Activated naive CD4-positive, alpha-beta T cell treated with anti-CD3 and anti-CD28 coated beads, Interleukin-2, amount 10 ng/mL, durations not matched to agents 7 days and 5 days (primary cell): ENCODE measurements at regions of chr17 and their contacts with region 1.

Region 1: DNA sequence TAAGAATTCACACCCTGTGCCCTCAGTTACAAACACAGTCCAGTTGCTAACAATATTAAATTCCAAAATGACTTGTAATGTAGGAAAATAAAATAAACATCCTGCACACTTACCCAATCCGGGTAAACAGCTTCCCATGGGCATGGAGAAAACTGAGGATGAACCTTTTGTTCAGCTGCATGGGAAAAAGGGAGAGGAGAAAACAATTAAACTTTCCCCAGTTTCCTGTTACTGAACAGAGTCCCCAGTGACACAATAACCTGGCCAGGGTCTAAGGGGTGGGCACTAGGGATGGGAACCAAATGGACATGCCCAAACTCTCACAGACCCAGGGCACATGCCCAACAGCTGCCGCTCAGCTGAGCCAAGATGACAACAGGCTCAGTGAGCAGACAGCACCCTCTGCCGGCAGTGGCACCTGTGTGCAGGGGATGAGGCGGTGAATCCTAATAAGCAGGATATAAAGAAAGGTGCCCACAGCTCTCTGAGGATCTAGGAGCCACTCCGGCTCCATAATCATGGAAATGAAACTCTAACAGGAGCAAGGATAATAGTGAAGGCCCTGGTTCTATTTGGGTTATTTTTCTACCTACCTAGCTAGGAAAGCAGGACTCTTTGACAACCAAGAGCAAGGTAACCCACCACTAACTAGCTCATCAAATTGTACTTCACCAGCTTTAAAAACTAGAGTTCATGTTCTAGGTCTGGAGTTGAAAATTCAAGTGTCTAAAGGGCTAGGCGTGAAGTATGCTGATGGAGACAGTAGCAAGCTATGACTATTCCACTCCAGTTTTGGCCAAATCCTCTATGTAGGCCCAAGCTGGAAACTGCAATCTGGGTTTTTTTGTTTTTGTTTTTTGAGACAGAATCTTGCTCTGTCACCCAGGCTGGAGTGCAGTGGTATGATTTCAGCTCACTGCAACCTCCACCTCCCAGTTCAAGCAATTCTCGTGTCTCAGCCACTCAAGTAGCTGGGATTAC is 58.8 kb downstream of the SMG6 start:
- DNase-seq: peak; percentile 91
- H3K4me3 Mint-ChIP-seq: no peak overlapping the region
- H3K27ac Mint-ChIP-seq: peak overlapping the region; percentile 78
- H3K4me1 Mint-ChIP-seq: peaks cover 83% of the 10 kb centered on the region
- H3K27me3 Mint-ChIP-seq: no peaks in the 10 kb centered on the region

Region 2: DNA sequence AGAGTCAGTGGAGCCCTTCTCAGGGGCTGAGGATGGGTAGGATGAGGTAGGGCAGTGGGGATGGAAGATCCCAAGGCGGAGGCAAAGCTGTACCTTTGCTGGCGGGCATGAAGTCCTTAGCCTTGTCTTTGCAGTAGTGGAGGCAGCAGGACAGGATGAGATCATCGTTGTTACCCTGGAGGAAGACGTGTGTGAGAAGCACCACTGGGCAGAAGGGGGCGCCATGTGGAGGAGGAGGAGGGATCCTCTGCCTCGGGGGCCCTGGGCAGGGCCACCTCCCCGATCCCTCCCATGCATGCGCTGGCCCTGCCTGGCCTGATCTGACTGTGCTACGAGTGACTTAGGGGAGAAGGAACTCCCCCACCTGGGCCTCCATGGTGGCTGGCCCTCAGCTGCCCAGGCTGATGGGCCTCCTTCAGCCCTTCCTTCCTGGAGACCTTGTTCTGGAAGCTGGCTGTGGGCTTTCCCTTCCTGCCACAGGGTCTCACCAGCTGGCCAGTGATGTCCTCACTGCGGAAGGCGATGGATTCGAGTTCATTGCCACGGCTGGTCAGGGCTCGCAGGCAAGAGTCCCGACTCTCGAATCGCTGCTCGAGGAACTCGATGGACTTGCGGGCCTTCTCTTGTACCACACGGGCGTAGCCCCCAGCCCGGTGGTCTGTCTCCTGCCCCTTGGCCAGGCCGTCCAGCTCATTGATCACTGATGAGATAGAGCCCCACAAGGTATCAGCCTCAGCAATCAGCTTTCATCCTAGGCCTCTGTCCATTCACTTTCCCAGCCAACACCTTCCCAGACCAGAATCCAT is 179.7 kb before region 1 on chr17:
- CTCF ChIA-PET with region 1: interaction called, 147 read pairs
- DNase-seq: peak; percentile 78
- H3K4me3 Mint-ChIP-seq: no peak overlapping the region
- H3K27ac Mint-ChIP-seq: peak overlapping the region; percentile 52
- H3K4me1 Mint-ChIP-seq: peaks cover 51% of the 10 kb centered on the region
- H3K27me3 Mint-ChIP-seq: no peaks in the 10 kb centered on the region

Region 3: DNA sequence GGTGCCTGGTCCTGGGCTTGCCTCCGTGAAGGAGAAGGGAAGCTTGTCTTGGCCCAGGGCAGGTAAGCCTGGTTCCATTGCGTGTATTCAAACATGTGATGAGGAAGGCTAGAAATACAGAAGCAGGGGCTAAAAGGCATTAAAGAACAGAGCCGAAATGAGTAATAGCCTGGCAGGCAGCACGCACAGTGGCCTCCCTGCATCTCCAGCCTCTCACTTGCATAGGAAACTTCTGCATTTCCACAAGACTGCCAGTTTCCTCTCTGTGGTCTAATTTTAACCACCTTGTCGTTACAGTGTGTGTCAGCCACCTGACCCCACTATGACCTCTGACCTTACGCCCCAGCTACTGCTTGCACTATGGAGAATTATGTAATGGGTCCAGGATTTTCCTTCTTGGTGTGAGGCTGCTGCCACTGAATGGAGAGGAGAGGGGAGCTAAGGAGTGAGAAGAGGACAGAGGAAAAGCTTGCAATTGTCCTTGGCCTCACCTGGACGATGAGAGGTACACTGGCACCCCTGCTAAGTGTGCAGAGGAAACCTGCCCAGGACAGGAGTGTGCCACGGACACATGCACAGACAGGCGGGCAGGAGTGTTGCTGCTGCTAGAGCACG is 157.1 kb before region 1 on chr17:
- CTCF ChIA-PET with region 1: interaction called, 21 read pairs
- DNase-seq: peak; percentile 79
- H3K4me3 Mint-ChIP-seq: peak overlapping the region; percentile 34
- H3K27ac Mint-ChIP-seq: peak overlapping the region; percentile 50
- H3K4me1 Mint-ChIP-seq: peaks cover 81% of the 10 kb centered on the region
- H3K27me3 Mint-ChIP-seq: no peaks in the 10 kb centered on the region

Region 4: DNA sequence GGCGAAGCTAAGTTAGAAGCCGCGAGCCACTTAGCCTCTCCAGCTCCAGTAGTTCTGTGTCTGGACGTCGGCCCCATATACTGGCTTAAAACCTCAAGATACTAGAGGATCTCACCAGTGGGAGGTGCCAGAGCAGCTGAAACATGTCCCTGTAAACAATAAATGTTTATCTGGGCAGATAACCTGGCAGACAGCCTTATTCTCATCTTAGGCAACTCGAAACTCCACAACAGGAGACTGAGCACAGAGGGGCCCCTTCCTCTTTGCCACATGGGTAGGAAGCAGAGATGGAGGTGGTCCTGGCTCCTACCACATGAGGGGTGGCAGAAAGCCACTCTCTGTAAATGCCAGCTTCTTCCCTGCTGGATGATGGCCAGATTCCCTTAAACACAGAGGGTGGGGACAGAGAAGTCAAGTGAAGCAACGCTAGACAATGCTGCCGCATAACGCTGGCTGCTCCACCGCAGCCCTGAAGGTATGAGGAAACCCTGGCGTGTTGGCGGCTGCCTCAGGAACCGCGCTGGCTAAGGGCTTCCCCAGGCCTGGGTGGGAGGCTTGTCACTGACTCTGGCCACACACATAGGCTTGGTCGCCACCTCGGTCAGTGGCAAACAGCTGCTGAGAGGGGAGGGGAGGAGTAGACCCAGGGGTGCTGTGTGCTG is 122.1 kb before region 1 on chr17:
- CTCF ChIA-PET with region 1: interaction called, 13 read pairs
- DNase-seq: no peak
- H3K4me3 Mint-ChIP-seq: peak overlapping the region; percentile 11
- H3K27ac Mint-ChIP-seq: no peak overlapping the region
- H3K4me1 Mint-ChIP-seq: peaks cover 27% of the 10 kb centered on the region
- H3K27me3 Mint-ChIP-seq: no peaks in the 10 kb centered on the region

Region 5: GRCh38 chr17:2232244-2232638 is 12.6 kb before region 1 on chr17:
- CTCF ChIA-PET with region 1: interaction called, 15 read pairs
- DNase-seq: no peak
- H3K4me3 Mint-ChIP-seq: no peak overlapping the region
- H3K27ac Mint-ChIP-seq: no peak overlapping the region
- H3K4me1 Mint-ChIP-seq: peaks cover 51% of the 10 kb centered on the region
- H3K27me3 Mint-ChIP-seq: no peaks in the 10 kb centered on the region

Region 6: DNA sequence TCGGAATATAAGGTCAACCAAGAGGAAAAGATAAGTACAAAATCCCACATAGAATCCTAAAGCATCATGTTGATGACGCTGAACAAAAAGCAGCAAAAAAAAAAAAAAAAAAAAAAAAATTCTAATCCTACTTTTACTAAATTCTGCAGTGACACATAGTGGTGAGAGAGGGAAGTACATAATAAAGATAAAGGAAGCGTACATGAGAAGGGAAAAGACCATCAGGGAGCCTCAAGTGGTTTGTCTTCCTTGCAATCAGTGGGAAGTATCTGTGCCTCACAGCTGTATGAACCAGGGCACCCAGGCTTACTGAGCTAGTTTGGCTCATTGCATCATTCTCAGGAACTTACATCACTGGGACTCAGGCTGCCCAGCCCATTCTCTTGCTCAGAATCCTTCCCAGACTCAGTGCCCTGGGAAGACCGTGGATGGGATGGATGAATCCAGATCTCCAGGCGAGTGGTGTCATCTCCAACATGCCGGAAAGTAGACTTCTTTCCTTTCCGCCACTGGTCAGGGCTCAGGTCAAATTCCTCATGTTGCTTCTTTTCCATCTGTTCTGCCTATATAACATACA is 37.5 kb after region 1 on chr17:
- CTCF ChIA-PET with region 1: interaction called, 84 read pairs
- DNase-seq: no peak
- H3K4me3 Mint-ChIP-seq: no peak overlapping the region
- H3K27ac Mint-ChIP-seq: peak overlapping the region; percentile 75
- H3K4me1 Mint-ChIP-seq: peaks cover 53% of the 10 kb centered on the region
- H3K27me3 Mint-ChIP-seq: no peaks in the 10 kb centered on the region

Region 7: DNA sequence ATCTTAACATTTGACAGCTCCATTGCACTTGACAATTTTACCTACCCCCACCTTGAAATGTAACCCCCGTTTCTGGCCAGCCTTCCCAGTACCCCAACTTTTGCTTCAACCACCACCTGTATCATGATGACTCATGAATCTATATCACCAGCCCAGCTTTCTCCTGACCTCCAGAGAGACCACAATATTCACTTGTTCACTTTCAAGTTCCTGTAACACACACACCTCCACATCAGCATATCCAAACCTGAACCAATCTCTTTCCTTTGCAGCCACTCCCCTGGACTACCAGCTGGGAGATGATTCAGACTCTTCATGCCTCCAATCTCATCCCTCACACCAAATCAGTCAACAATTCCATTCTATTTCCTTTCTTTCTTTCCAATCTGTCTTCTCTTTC is 50.7 kb after region 1 on chr17:
- CTCF ChIA-PET with region 1: no interaction called
- DNase-seq: no peak
- H3K4me3 Mint-ChIP-seq: no peak overlapping the region
- H3K27ac Mint-ChIP-seq: no peak overlapping the region
- H3K4me1 Mint-ChIP-seq: peaks cover 44% of the 10 kb centered on the region
- H3K27me3 Mint-ChIP-seq: no peaks in the 10 kb centered on the region

Region 8: GRCh38 chr17:2423271-2423670 is 178.4 kb after region 1 on chr17:
- CTCF ChIA-PET with region 1: no interaction called
- DNase-seq: no peak
- H3K4me3 Mint-ChIP-seq: no peak overlapping the region
- H3K27ac Mint-ChIP-seq: no peak overlapping the region
- H3K4me1 Mint-ChIP-seq: no peaks in the 10 kb centered on the region
- H3K27me3 Mint-ChIP-seq: no peaks in the 10 kb centered on the region